ENCODE measurements at regions of chr10 and their contacts with region 1.

Region 1: DNA sequence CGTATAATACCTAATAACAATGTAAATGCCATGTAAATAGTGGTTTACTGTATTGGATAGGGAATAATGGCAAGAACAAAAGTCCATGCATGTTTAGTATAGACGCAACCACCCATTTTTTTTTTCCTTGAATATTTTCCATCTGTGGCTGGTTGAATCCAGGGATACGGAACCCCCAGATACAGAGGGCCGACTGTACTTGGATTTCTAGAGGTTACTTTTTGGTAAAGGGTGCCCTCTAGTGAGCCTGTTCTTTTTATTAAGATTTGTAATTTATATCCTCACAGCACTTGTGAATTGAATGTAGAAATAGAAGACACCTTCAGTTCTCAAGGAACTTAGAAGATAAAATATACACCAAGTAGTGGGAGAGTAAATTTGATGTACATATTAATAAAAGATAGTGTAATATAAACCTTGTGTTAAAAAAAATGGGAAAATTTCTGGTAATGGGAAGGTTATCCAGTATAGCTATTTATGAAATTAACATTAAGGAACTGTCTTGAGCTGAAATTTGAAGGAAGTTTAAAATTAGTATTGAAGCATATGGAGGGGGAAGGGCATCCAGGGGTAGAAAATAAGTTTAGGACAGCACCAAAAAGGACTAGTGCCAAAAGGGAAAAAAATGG is 32.0 kb downstream of the EXOC6 start:
- DNase-seq: peak; percentile 54
- ATAC-seq: peak; percentile 37; the same call in 2 of the 3 replicates
- H3K4me3 ChIP-seq: no peak overlapping the region
- H3K27ac ChIP-seq: no peak overlapping the region
- H3K4me1 ChIP-seq: no peaks in the 10 kb centered on the region
- H3K27me3 ChIP-seq: no peaks in the 10 kb centered on the region
- CTCF ChIP-seq: peak; percentile 61
- EP300 ChIP-seq: no peak
- POLR2A ChIP-seq: no peak
- RAD21 ChIP-seq: peak; percentile 30; the same call in 1 of the 2 replicates

Region 2: DNA sequence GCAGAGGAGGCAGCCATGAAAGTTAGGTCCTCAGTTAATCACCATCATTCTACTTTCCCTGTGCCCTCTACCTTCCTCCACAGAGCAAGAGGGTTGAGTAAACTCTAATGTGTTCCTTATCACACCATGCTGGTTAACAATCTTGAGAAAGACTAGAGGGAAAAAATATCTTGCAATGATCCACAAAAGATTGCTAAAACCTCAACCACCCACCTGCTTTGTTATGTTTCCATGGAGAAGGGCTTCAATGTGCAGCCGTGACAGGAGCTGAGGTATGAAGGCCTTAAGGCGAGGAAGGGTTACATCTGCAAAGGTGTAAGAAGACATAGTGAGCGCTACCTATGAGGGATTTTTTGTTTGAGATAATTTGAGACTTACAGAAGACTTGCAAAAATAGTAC is 410.3 kb before region 1 on chr10:
- CTCF ChIA-PET with region 1: no interaction called
- POLR2A ChIA-PET with region 1: no interaction called
- in situ Hi-C with region 1: no loop called
- intact Hi-C with region 1: no loop called
- DNase-seq: no peak
- ATAC-seq: no peak
- H3K4me3 ChIP-seq: no peak overlapping the region
- H3K27ac ChIP-seq: no peak overlapping the region
- H3K4me1 ChIP-seq: no peaks in the 10 kb centered on the region
- H3K27me3 ChIP-seq: no peaks in the 10 kb centered on the region
- CTCF ChIP-seq: no peak
- EP300 ChIP-seq: no peak
- POLR2A ChIP-seq: no peak
- RAD21 ChIP-seq: no peak

Region 3: DNA sequence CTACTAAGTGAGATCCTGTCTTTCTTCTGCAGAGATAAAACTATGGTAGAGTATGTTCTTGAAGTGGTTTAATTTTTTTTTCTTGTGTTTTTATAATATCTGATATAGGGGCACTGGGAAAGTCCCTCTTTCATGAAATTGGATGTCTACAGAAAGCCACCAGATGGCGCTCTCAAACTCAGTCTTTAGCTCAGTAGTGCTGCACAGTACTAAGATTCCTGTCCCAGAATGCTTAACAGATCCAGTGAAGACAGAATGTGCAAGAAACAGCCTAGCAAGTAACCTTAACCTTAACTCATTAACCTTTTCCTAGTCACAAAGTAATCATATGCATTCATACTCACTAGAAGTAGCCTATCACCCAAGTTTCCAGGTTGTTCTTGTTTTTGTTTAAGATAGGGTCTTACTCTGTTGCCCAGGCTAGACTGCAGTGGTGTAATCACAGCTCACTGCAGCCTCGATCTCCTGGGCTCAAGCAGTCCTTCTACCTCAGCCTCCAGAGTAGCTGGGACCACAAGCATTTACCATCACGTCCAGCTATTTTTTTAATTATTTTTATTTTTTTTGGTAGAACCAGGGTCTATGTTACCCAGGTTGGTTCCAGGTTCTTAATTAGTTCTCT is 363.2 kb before region 1 on chr10:
- CTCF ChIA-PET with region 1: interaction called, 5 read pairs
- POLR2A ChIA-PET with region 1: no interaction called
- in situ Hi-C with region 1: no loop called
- intact Hi-C with region 1: loop called (anchors 5 kb)
- DNase-seq: peak; percentile 66
- ATAC-seq: peak; percentile 95
- H3K4me3 ChIP-seq: no peak overlapping the region
- H3K27ac ChIP-seq: no peak overlapping the region
- H3K4me1 ChIP-seq: no peaks in the 10 kb centered on the region
- H3K27me3 ChIP-seq: no peaks in the 10 kb centered on the region; a peak in 1 of 5 replicates
- CTCF ChIP-seq: peak; percentile 77
- EP300 ChIP-seq: no peak
- POLR2A ChIP-seq: no peak
- RAD21 ChIP-seq: no peak

Region 4: DNA sequence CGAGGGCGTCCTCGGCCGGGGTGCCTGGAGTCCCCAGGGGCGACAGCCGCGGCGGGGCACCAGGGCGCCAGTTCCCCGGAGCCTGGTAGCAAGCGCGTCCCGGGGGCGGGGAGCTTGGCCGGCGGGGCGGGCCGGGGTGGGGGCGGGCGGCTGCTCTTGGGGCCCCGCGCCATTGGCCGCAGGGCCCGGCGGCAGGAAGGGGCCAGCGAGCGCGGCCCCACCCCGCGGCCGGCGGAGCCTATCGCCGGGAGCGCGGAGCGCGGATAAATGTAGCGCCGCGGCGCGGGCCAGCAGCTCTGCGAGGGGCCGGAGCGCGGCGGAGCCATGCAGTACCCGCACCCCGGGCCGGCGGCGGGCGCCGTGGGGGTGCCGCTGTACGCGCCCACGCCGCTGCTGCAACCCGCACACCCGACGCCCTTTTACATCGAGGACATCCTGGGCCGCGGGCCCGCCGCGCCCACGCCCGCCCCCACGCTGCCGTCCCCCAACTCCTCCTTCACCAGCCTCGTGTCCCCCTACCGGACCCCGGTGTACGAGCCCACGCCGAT is 190.6 kb before region 1 on chr10 and contains the start of gene HHEX:
- CTCF ChIA-PET with region 1: interaction called, 3 read pairs
- POLR2A ChIA-PET with region 1: no interaction called
- in situ Hi-C with region 1: no loop called
- intact Hi-C with region 1: loop called (anchors 1 kb)
- DNase-seq: peak; percentile 56
- ATAC-seq: peak; percentile 89
- H3K4me3 ChIP-seq: peak within 1 kb of the TSS; percentile 80 to 98 (median 94)
- H3K27ac ChIP-seq: peak within 1 kb of the TSS; percentile 86
- H3K4me1 ChIP-seq: peaks cover 29% of the 10 kb centered on the region
- H3K27me3 ChIP-seq: no peaks in the 10 kb centered on the region; a peak in 1 of 5 replicates
- CTCF ChIP-seq: no peak; the same call in 1 of the 2 replicates
- EP300 ChIP-seq: no peak
- POLR2A ChIP-seq: peak; percentile 96 to 98
- RAD21 ChIP-seq: peak; percentile 19; the same call in 1 of the 2 replicates
- total RNA-seq, gene HHEX: 46.3 and 48.7 TPM in 2 replicates

Region 5: GRCh38 chr10:92914478-92915325 is 34.4 kb after region 1 on chr10:
- CTCF ChIA-PET with region 1: no interaction called
- POLR2A ChIA-PET with region 1: no interaction called
- in situ Hi-C with region 1: no loop called
- intact Hi-C with region 1: loop called (anchors 1 kb)
- DNase-seq: peak; percentile 68
- ATAC-seq: peak; percentile 96
- H3K4me3 ChIP-seq: no peak overlapping the region
- H3K27ac ChIP-seq: no peak overlapping the region
- H3K4me1 ChIP-seq: no peaks in the 10 kb centered on the region
- H3K27me3 ChIP-seq: no peaks in the 10 kb centered on the region
- CTCF ChIP-seq: peak; percentile 69
- EP300 ChIP-seq: no peak
- POLR2A ChIP-seq: no peak
- RAD21 ChIP-seq: no peak

Region 6: GRCh38 chr10:93352638-93353383 is 472.5 kb after region 1 on chr10:
- CTCF ChIA-PET with region 1: no interaction called
- POLR2A ChIA-PET with region 1: no interaction called
- in situ Hi-C with region 1: no loop called
- intact Hi-C with region 1: loop called (anchors 10 kb)
- DNase-seq: peak; percentile 42
- ATAC-seq: no peak
- H3K4me3 ChIP-seq: no peak overlapping the region
- H3K27ac ChIP-seq: no peak overlapping the region
- H3K4me1 ChIP-seq: no peaks in the 10 kb centered on the region
- H3K27me3 ChIP-seq: no peaks in the 10 kb centered on the region
- CTCF ChIP-seq: peak; percentile 57
- EP300 ChIP-seq: no peak
- POLR2A ChIP-seq: no peak
- RAD21 ChIP-seq: peak; percentile 26; the same call in 1 of the 2 replicates